ENCODE measurements at regions of chr3 and their contacts with region 1.

Region 1: DNA sequence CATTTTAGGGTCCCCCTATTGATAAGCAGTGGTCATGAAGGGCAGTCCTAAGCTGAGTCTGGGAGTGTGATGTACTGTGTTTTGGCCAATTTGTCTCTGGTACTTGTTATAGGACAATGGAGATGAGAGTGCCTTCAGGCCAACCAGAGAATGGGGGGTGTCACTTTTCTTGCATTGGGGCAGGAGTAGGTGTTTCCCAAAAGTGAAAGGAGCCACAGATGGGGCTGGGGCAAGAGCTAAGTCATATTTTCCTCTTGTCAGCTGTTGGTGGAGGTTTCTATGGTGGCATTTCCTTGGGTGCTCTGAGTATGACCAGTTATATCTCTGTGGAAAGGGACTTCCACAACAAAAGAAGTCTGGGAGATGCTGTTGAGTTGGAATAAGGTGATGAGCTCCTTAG is 24.7 kb upstream of the BSN start:
- DNase-seq: no peak
- H3K4me3 Mint-ChIP-seq: no peak overlapping the region
- H3K27ac Mint-ChIP-seq: peak overlapping the region; percentile 64
- H3K4me1 Mint-ChIP-seq: peaks cover 21% of the 10 kb centered on the region
- H3K27me3 Mint-ChIP-seq: no peaks in the 10 kb centered on the region

Region 2: DNA sequence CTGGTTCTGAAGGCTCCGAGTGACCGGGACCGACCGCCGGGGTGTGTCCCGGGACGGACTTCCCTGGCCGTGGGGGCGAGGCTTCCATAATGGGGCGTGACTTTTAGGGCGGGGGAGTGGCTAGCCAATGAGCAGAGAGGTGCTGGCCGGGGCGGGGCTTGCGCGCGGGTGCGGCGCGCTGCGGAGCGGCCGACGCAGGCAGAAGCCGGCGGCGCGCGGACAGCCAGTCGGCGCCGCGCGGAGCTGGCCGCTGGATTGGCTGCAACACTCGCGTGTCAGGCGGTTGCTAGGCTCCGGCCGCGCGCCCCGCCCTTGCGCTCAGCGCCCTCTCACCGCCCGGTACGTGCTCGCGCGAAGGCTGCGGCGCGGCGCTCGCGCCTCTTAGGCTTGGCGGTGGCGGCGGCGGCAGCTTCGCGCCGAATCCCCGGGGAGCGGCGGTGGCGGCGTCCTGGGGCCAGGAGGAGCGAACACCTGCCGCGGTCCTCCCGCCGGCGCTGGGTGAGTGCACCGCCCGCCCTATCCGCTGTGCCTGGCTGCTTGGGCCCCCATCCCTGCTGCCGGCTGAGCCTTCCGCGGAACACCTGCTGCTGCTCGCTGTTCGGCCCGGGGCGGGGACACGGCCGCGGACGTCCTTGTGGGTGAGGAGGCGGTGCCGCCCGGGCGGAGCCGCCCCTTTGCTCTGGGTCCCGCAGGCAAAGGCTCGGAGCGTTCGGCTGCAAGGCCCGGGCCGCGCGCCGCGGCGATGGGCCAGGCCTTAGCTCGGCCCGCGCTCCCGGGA is 59.4 kb before region 1 on chr3 and contains the start of gene DAG1:
- intact Hi-C with region 1: loop called (anchors 2 kb)
- DNase-seq: peak; percentile 96
- H3K4me3 Mint-ChIP-seq: peak within 1 kb of the TSS; percentile 92
- H3K27ac Mint-ChIP-seq: peak within 1 kb of the TSS; percentile 88
- H3K4me1 Mint-ChIP-seq: peaks cover 23% of the 10 kb centered on the region
- H3K27me3 Mint-ChIP-seq: no peaks in the 10 kb centered on the region
- total RNA-seq, gene DAG1: 20.5 and 23.7 TPM in 2 replicates

Region 3: GRCh38 chr3:49906004-49906743 is 376.6 kb after region 1 on chr3:
- intact Hi-C with region 1: no loop called
- DNase-seq: peak; percentile 29
- H3K4me3 Mint-ChIP-seq: peak overlapping the region; percentile 16
- H3K27ac Mint-ChIP-seq: peak overlapping the region; percentile 57
- H3K4me1 Mint-ChIP-seq: peaks cover 32% of the 10 kb centered on the region
- H3K27me3 Mint-ChIP-seq: no peaks in the 10 kb centered on the region